ENCODE measurements at regions of chr18 and their contacts with region 1.

Region 1: DNA sequence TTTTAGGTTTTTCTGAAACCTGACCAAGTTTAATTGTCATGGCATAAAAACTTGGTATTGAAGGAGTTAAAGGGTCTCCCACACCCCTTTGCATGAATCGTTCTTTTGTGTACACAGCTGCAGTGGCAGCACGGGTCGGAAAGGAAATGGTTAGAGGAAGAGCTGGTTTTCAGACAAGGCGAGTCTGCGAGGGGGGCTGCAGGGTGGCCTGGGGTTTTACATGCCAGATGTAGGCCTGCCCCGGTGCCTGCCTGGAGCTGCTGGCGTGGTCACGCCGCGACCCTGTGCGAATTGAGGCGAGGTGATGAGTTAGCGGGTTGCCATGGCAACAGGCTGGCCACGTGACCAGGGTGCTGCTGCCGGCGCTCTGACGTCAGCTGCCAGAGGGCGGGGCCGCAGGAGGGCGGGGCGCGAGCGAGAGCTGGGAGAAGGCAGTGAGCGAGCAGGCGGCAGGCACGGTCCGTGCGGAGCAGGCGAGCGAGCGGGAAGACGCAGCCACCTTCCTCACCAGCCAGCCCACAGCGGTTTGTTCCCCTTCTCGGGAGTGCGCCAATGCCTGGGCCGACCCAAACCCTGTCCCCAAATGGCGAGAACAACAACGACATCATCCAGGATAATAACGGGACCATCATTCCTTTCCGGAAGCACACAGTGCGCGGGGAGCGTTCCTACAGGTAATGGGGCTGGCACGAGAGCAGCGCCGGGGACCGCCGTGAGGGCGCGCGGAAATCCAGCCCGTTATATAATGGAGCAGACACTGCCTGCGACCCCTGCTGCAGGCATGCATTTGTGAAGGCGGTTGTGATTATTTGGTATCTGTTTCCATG is at the start of gene MAPRE2:
- DNase-seq: peak; percentile 99
- H3K4me3 Mint-ChIP-seq: peak within 1 kb of the TSS; percentile 96
- H3K27ac Mint-ChIP-seq: peak within 1 kb of the TSS; percentile 95
- H3K4me1 Mint-ChIP-seq: peaks cover 59% of the 10 kb centered on the region
- H3K27me3 Mint-ChIP-seq: no peaks in the 10 kb centered on the region
- total RNA-seq, gene MAPRE2: 62.5 to 66.2 TPM

Region 2: GRCh38 chr18:34867520-34867919 is 173.7 kb before region 1 on chr18:
- CTCF ChIA-PET with region 1: no interaction called
- intact Hi-C with region 1: loop called (anchors 1 kb)
- DNase-seq: no peak
- H3K4me3 Mint-ChIP-seq: no peak overlapping the region
- H3K27ac Mint-ChIP-seq: peak overlapping the region; percentile 53
- H3K4me1 Mint-ChIP-seq: peaks cover 51% of the 10 kb centered on the region
- H3K27me3 Mint-ChIP-seq: no peaks in the 10 kb centered on the region

Region 3: GRCh38 chr18:35095983-35096676 is 54.9 kb after region 1 on chr18:
- CTCF ChIA-PET with region 1: interaction called, 3 read pairs
- intact Hi-C with region 1: loop called (anchors 1 kb)
- DNase-seq: no peak
- H3K4me3 Mint-ChIP-seq: no peak overlapping the region
- H3K27ac Mint-ChIP-seq: peak overlapping the region; percentile 0
- H3K4me1 Mint-ChIP-seq: peaks cover 43% of the 10 kb centered on the region
- H3K27me3 Mint-ChIP-seq: no peaks in the 10 kb centered on the region

Region 4: GRCh38 chr18:35290073-35290735 is 249.0 kb after region 1 on chr18 and contains the start of gene ZSCAN30:
- CTCF ChIA-PET with region 1: no interaction called
- intact Hi-C with region 1: loop called (anchors 1 kb)
- DNase-seq: peak; percentile 96
- H3K4me3 Mint-ChIP-seq: peak within 1 kb of the TSS; percentile 96
- H3K27ac Mint-ChIP-seq: peak within 1 kb of the TSS; percentile 97
- H3K4me1 Mint-ChIP-seq: peaks cover 48% of the 10 kb centered on the region
- H3K27me3 Mint-ChIP-seq: peaks cover 2% of the 10 kb centered on the region
- total RNA-seq, gene ZSCAN30: 12.0 to 14.3 TPM

Region 5: GRCh38 chr18:35580701-35581539 is 539.7 kb after region 1 on chr18:
- CTCF ChIA-PET with region 1: no interaction called
- intact Hi-C with region 1: loop called (anchors 10 kb)
- DNase-seq: peak; percentile 51
- H3K4me3 Mint-ChIP-seq: peak overlapping the region; percentile 74
- H3K27ac Mint-ChIP-seq: peak overlapping the region; percentile 71
- H3K4me1 Mint-ChIP-seq: peaks cover 45% of the 10 kb centered on the region
- H3K27me3 Mint-ChIP-seq: peaks cover 15% of the 10 kb centered on the region

Region 6: DNA sequence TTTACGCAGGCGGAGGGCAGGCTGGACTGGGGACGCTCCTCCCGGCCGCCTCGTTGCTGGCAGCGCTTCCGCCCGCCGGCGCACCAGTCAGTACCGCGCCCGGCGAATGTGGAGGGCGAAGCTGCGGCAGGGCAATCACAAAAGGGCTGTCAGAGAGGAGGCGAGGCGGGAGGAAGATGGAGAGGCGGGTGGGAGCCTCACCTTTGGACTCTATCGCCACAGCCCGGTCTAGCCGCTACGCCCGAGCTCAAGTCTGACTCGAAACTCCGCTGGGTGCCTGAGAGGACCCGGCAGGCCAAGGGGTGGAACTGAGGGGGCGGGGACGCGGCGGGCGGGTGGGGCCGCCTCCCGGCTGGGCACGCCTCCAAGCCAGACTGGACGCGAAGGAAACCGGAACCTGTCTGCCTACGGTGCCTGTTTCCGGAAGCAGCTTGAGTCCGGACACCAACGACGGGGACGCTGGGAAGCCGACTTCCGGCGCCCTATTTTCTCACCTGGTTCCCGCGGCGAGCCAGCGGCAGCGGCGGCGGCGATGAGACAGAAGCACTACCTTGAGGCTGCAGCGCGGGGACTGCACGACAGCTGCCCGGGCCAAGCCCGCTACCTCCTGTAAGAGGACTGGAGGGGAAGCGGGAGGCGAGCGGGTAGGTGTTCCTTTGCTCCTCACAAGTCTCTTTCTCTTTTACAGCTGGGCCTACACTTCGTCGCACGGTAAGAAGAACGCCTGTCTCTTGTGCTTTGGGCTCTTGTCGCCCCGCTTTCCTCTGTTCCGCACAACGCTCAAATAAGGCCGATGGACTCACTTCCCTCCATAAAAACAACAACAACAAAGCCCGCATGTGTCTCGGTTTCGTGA is 931.2 kb after region 1 on chr18 and contains the start of gene RMP24:
- CTCF ChIA-PET with region 1: no interaction called
- intact Hi-C with region 1: loop called (anchors 2 kb)
- DNase-seq: peak; percentile 96
- H3K4me3 Mint-ChIP-seq: peak within 1 kb of the TSS; percentile 97
- H3K27ac Mint-ChIP-seq: peak within 1 kb of the TSS; percentile 96
- H3K4me1 Mint-ChIP-seq: peaks cover 48% of the 10 kb centered on the region
- H3K27me3 Mint-ChIP-seq: no peaks in the 10 kb centered on the region